HEK293T (cell line): ENCODE measurements at regions of chrX and their contacts with region 1.

Region 1: DNA sequence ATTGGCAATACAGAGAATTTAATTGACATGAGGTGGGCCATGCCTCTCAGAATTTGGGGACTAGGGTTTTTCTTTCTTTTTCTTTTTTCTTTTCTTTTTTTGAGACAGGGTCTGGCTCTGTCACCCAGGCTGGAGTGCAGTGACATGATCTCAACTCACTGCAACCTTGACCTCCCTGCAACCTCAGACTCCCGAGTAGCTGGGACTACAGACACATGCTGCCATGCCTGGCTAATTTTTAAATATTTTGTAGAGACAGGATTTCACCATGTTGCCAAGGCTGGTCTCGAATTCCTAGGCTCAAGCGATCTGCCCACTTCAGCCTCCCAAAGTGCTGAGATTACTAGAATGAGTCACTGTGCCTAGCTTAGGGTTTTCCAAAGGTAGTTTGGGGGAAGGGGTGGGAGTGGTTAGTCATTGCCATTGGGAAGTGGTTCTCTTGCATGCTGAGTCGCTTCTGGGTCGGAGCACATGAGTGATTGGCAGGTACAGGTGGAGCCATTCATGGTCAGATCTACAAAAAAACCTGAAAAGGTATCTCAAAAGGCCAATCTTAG is 54.5 kb downstream of the MID2 start:
- DNase-seq: no peak

Region 2: DNA sequence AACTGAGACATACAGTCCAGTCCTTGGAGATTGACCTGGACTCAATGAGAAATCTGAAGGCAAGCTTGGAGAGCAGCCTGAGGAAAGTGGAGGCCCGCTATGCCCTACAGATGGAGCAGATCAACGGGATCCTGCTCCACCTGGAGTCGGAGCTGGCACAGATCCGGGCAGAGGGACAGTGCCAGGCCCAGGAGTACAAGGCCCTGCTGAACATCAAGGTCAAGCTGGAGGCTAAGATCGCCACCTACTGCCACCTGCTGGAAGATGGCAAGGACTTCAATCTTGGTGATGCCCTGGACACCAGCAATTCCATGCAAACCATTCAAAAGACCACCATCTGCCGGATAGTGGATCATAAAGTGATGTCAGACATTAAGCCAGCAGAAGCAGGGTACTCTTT is 451.0 kb before region 1 on chrX:
- CTCF ChIA-PET with region 1: no interaction called
- POLR2A ChIA-PET with region 1: no interaction called
- DNase-seq: no peak

Region 3: DNA sequence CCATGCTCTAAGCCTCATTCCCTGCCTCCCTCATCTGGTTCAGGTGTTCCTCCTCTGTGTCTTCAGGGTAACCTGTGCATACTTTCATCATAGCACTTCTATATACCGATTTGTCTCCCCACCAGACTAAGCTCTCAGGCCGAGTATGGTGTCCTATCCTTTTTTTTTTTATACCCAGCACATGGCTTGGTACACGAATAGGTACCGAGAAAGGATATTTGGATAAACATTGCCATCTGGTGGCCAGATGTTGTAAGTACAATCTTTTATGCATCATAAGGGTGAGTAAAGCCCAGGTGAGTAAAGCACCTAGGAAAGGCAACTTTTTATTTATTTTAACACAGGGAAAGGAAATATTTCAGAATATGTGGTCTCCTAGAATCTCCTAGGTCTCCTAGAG is 13.9 kb after region 1 on chrX:
- CTCF ChIA-PET with region 1: interaction called, 10 read pairs
- POLR2A ChIA-PET with region 1: no interaction called
- DNase-seq: peak; percentile 74